ENCODE measurements at regions of chr9 and their contacts with region 1.

Region 1: GRCh38 chr9:11319538-11319937 is 706.7 kb upstream of the PTPRD start:
- DNase-seq: peak in 1 of 10 donors; percentile 16

Region 2: DNA sequence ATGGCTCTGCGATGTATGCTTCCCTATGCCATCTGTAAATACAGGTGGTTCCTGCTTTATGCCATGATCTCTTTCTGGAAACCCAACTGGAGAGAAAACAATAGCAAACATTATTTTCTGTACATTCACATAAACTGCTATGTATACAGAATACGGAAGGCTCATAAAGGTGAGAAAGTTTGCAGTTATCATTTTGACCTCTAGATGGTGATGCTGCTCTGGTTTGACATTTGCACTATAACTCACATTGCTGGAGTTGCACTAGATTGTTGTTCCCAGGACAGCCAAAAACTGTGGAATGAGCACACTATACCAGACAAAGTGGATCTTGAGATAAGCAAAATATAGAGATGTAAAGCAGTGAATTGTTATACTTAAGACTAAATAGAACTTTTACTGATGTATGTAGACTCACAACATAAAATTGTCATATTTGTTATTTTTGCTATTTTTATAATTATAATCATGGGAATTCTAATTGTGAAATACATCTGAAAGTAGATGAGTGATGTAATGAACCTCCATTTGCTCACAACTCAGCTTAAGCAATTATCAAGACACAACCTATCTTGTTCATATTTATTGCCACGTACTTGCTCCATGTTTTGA is 953.3 kb before region 1 on chr9:
- intact Hi-C with region 1: loop called (anchors 2 kb)
- DNase-seq: no peak

Measured in posterior cingulate gyrus (tissue), 11 donors.